Heart left ventricle (tissue), 16 donors: ENCODE measurements at regions of chr22 and their contacts with region 1.

Region 1: DNA sequence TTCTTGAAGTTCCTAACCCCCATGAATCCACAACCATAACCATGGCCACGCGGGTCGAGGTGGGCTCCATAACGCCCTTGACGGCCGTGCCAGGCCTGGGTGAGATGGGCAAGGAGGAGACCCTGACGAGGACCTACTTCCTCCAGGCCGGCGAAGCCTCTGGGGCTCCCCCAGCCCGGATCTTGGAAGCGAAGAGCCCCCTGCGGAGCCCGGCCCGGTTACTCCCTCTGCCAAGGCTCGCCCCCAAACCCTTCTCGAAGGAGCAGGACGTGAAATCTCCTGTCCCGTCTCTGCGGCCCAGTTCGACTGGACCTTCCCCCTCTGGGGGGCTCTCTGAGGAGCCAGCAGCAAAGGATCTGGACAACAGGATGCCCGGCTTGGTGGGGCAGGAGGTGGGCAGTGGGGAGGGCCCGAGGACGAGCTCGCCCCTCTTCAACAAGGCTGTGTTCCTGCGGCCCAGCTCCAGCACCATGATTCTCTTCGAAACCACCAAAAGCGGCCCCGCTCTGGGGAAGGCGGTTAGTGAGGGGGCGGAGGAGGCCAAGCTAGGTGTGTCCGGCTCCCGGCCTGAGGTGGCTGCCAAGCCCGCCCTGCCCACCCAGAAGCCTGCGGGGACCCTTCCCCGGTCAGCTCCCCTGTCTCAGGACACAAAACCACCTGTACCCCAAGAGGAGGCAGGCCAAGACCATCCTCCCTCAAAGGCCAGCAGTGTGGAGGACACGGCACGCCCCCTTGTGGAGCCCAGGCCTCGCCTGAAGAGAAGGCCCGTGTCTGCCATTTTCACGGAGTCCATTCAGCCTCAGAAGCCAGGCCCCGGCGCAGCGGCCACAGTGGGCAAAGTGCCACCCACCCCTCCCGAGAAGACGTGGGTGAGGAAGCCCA is 75.7 kb downstream of the KIAA1671 start:
- DNase-seq: peak in 4 of 5 donors; percentile 34 to 53 (median 44)
- ATAC-seq: peak; percentile 7 to 53 (median 32)
- H3K4me3 ChIP-seq: no peak overlapping the region
- H3K27ac ChIP-seq: peak overlapping the region in 7 of 12 donors; percentile 12 to 72 (median 52)
- H3K4me1 ChIP-seq: peaks cover 0 to 53% (median 33%) of the 10 kb centered on the region in 12 donors
- H3K27me3 ChIP-seq: no peaks in the 10 kb centered on the region
- CTCF ChIP-seq: peak; percentile 15 to 61 (median 47)
- POLR2A ChIP-seq: no peak

Region 2: GRCh38 chr22:24985826-24986214 is 42.4 kb before region 1 on chr22:
- intact Hi-C with region 1: loop called in 2 of 10 experiments (anchors 5 kb)
- DNase-seq: peak in 4 of 5 donors; percentile 41 to 74 (median 63)
- ATAC-seq: peak; percentile 59 to 91 (median 82)
- H3K4me3 ChIP-seq: peak overlapping the region in 4 of 12 donors; percentile 5 to 12 (median 11)
- H3K27ac ChIP-seq: peak overlapping the region; percentile 43 to 84 (median 76)
- H3K4me1 ChIP-seq: peaks cover 6 to 89% (median 58%) of the 10 kb centered on the region in 12 donors
- H3K27me3 ChIP-seq: no peaks in the 10 kb centered on the region
- CTCF ChIP-seq: no peak
- POLR2A ChIP-seq: no peak